ENCODE measurements at regions of chr21 and their contacts with region 1.

Region 1: DNA sequence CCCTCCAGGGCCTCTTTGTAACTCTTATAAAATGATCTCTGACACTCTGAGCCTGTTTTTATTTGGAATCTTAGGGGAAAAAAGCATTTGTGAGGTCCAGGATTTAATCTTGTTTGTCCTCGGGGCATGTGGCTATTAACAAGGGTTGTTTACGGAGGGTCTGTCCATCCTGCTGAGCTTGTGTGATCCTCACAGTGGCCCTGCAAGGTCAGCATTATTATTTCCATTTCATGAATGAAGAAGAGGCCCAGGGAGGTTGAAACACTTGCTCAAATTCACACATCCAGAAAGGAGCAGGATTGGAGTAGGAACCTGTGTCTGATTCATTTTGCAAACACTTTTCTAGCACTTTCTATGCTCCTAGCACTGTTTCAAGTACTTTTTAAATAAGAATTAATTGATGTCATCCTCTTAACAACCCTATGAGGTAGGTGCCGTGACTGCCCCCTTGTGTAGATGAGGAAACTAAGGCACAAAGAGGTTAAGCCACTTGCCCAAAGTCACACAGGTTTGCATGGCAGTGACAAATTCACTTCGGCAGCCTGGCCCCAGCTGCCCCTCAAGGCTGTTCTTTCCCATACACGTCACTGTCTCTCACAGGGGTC is 178.9 kb downstream of the MIS18A start:
- DNase-seq: no peak
- H3K4me3 ChIP-seq: no peak overlapping the region
- H3K27ac ChIP-seq: no peak overlapping the region
- H3K4me1 ChIP-seq: no peaks in the 10 kb centered on the region
- H3K27me3 ChIP-seq: no peaks in the 10 kb centered on the region
- CTCF ChIP-seq: no peak
- EP300 ChIP-seq: no peak
- POLR2A ChIP-seq: no peak

Region 2: DNA sequence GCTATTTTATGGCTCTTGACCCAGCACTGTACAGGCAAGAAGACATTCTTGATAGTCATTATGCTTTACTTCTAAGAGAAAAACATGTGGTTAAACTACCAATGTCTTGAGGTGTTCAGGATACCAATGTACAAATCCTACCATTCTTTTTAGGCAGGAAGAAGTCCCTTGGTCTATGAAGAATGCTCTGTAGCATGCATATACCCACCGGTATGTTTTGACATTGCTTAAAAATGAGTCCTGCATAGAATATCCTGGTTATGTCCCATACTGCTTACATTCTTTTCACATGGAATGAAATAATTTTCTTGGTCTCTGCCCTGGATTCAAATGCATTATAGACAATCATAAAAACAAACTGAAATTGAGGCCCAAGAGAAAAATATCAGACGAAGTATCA is 1767.2 kb before region 1 on chr21:
- intact Hi-C with region 1: loop called in 1 of 4 experiments (anchors 5 kb)
- DNase-seq: no peak
- H3K4me3 ChIP-seq: no peak overlapping the region
- H3K27ac ChIP-seq: no peak overlapping the region
- H3K4me1 ChIP-seq: no peaks in the 10 kb centered on the region
- H3K27me3 ChIP-seq: no peaks in the 10 kb centered on the region
- CTCF ChIP-seq: no peak
- EP300 ChIP-seq: no peak
- POLR2A ChIP-seq: no peak

Region 3: DNA sequence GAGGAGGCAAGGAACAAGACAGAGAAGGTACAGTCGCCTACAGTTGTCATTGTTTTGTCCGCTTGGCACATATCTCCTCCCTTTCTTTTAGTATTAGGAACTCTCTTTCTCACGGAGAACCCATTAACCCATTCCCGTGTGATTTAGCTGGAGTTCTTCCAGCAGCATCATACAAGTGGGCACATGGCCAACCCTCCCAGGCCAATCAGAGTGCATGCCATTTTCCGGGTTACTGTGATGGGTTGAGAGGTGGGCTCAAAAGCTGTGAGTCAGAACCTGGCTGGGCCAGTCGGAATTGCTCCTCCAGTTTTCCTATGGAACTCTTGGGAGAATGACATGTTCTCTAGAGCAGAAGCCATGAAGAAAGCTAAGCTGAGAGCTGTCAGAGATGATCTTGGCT is 523.5 kb before region 1 on chr21:
- intact Hi-C with region 1: no loop called
- DNase-seq: no peak
- H3K4me3 ChIP-seq: no peak overlapping the region
- H3K27ac ChIP-seq: no peak overlapping the region
- H3K4me1 ChIP-seq: no peaks in the 10 kb centered on the region
- H3K27me3 ChIP-seq: no peaks in the 10 kb centered on the region
- CTCF ChIP-seq: no peak
- EP300 ChIP-seq: no peak
- POLR2A ChIP-seq: no peak

Region 4: DNA sequence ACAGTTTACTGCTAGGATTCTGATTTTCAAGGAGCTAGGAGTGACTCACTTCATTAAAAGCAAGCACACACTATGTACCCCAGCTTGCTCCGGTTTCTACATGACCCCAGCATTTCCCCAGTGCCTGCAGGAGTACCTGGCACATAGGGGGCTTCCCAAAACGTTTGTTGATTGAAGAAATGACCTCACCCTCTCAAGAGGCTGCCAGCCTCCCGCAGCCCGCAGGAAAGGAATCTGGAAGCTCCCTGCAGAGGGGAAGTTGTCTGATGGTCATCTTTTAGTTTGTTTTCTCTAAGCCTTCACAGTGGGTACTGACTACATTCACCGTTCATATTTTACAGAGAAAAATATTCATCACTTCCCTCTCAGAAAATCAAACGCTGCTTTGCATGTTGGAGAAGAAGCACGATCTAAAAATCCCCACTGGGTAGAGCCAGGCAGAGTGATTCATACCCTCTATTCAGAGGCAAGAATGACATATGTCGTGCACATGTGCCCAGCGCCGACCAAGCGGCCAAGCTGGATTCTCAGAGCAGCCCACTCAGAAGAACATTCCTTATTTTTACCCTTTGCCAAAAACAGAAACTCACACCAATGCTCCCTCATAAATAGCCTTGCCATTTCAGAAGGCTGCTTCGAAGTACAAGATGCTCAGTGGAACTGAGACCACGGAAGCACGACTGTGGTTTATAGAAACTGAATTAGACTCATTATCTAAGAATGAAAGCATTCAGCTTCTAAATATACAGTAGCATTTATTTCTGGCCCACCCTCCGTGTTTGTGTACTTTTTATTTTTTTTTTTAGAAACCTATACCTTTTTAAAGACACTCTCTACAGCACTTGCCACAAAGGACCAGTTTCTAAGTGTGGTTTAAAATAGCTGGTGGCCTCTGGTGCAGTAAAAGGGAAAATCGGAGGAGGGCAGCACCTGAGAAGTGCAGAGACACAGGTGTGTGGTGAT is 35.8 kb after region 1 on chr21:
- intact Hi-C with region 1: no loop called
- DNase-seq: no peak
- H3K4me3 ChIP-seq: no peak overlapping the region
- H3K27ac ChIP-seq: no peak overlapping the region
- H3K4me1 ChIP-seq: peaks cover 2% of the 10 kb centered on the region
- H3K27me3 ChIP-seq: no peaks in the 10 kb centered on the region
- CTCF ChIP-seq: no peak
- EP300 ChIP-seq: no peak
- POLR2A ChIP-seq: no peak

Measured in ovary (tissue), 10 donors.